ENCODE measurements at regions of chr19 and their contacts with region 1.

Region 1: DNA sequence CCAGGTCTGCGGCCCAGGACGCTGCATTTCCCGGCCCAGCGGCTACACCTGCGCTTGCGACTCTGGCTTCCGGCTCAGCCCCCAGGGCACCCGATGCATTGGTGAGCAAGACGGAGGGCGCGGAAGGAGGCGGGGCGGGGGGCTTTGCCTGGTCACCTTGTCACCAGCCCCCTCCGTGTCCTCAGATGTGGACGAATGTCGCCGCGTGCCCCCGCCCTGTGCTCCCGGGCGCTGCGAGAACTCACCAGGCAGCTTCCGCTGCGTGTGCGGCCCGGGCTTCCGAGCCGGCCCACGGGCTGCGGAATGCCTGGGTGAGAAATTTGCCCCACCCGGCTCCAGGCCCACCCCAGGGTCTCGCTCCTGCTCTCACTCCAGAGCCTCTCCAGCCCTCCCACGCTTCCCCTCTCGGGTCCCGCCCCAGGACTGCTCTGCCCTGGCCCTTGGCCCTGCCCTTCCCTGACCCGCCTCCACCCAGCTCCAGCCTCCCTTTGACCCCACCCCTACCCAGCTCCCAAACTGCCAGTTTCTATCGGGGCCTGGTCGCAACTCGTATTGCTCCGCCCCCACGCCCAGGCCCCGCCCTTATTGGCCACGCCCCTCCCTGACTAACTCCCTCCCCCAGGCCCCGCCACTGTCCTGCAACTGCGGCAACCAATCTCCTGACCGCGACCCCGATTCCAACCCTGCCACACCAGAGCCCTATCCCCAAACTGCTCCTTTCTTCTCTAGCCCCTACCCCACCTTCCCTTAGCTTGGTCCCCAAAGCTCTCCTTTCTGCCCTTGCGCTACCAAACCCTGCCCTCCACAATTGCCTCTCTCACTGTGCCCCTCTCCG is 8.6 kb downstream of the LTBP4 start:
- DNase-seq: peak; percentile 74 to 86 (median 82)
- H3K4me3 ChIP-seq: peak overlapping the region in 1 of 2 donors; percentile 63
- H3K4me3 Mint-ChIP-seq: peak overlapping the region; percentile 77 to 91 (median 88)
- H3K27ac ChIP-seq: peak overlapping the region; percentile 66
- H3K27ac Mint-ChIP-seq: peak overlapping the region; percentile 94 to 100 (median 97)
- H3K4me1 ChIP-seq: peaks cover 82% of the 10 kb centered on the region
- H3K4me1 Mint-ChIP-seq: peaks cover 39 to 98% (median 61%) of the 10 kb centered on the region in 4 donors
- H3K27me3 ChIP-seq: no peaks in the 10 kb centered on the region
- H3K27me3 Mint-ChIP-seq: no peaks in the 10 kb centered on the region

Region 2: DNA sequence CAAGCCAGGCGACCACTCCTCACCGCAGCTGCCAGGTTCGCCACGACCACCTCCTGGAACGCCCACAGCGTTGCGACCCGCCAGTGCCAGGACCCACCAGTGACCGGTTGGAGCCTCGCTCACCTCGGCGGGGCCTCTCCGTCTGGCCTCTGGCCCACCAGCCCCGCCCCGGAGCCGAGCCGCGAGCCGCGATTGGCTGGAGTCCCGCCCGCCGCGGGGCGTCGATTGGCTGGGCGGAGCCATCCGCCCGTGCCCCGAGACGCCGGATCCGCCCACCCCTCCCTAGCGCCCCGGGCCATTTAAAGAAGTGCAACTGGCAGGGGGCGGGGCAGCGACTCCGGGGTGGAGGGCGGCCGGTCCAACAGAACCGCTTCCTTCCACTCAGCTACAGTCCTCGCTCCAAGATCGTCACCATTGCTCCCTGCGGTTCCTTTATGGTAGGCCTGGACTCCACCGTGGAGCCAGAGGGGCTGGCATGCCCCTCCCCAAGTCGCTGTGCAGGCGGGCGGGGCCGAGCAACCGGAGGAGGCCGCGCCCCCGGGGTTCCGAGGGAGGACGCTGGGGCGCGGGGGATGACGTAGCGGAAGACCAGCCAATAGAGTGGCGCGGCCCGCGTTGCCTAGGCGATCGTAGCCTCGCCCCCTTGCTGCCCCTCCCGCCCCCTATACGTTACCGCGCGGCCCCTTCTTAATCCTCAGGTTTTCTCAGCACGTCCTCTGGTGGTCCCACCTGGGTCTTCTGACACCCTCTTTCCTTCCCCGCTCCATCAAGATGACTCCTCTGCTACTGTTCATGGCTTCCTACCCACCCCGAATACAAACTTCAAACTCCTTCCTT is 165.4 kb before region 1 on chr19 and contains the start of gene SERTAD3:
- CTCF ChIA-PET with region 1: no interaction called
- POLR2A ChIA-PET with region 1: interaction called, 16 read pairs
- intact Hi-C with region 1: loop called (anchors 2 kb)
- DNase-seq: peak; percentile 96 to 99 (median 97)
- H3K4me3 ChIP-seq: peak within 1 kb of the TSS; percentile 96 to 100
- H3K4me3 Mint-ChIP-seq: peak within 1 kb of the TSS; percentile 96 to 100 (median 100)
- H3K27ac ChIP-seq: peak within 1 kb of the TSS; percentile 75
- H3K27ac Mint-ChIP-seq: peak within 1 kb of the TSS; percentile 85 to 100 (median 99)
- H3K4me1 ChIP-seq: peaks cover 11% of the 10 kb centered on the region
- H3K4me1 Mint-ChIP-seq: peaks cover 11 to 22% (median 18%) of the 10 kb centered on the region in 4 donors
- H3K27me3 ChIP-seq: no peaks in the 10 kb centered on the region
- H3K27me3 Mint-ChIP-seq: no peaks in the 10 kb centered on the region
- total RNA-seq, gene SERTAD3: 17.8 to 19.4 TPM

Region 3: GRCh38 chr19:40598121-40598917 is 11.5 kb before region 1 on chr19:
- CTCF ChIA-PET with region 1: interaction called, 13 read pairs
- POLR2A ChIA-PET with region 1: interaction called, 94 read pairs
- intact Hi-C with region 1: loop called (anchors 2 kb)
- DNase-seq: peak; percentile 76 to 83 (median 78)
- H3K4me3 ChIP-seq: no peak overlapping the region
- H3K4me3 Mint-ChIP-seq: peak overlapping the region in 4 of 8 donors; percentile 45 to 58 (median 55)
- H3K27ac ChIP-seq: no peak overlapping the region
- H3K27ac Mint-ChIP-seq: peak overlapping the region in 3 of 7 donors; percentile 28 to 68 (median 42)
- H3K4me1 ChIP-seq: peaks cover 64% of the 10 kb centered on the region
- H3K4me1 Mint-ChIP-seq: peaks cover 34 to 63% (median 47%) of the 10 kb centered on the region in 4 donors
- H3K27me3 ChIP-seq: peaks cover 26% of the 10 kb centered on the region
- H3K27me3 Mint-ChIP-seq: peaks cover 19 to 29% of the 10 kb centered on the region in 2 donors

Region 4: GRCh38 chr19:40640744-40641143 is 31.0 kb after region 1 on chr19:
- CTCF ChIA-PET with region 1: interaction called, 106 read pairs
- POLR2A ChIA-PET with region 1: interaction called, 17 read pairs
- intact Hi-C with region 1: no loop called
- DNase-seq: no peak
- H3K4me3 ChIP-seq: no peak overlapping the region
- H3K4me3 Mint-ChIP-seq: no peak overlapping the region
- H3K27ac ChIP-seq: no peak overlapping the region
- H3K27ac Mint-ChIP-seq: peak overlapping the region in 1 of 7 donors; percentile 61
- H3K4me1 ChIP-seq: no peaks in the 10 kb centered on the region
- H3K4me1 Mint-ChIP-seq: peaks cover 0 to 3% (median 2%) of the 10 kb centered on the region in 4 donors
- H3K27me3 ChIP-seq: no peaks in the 10 kb centered on the region
- H3K27me3 Mint-ChIP-seq: peaks cover 2 to 4% of the 10 kb centered on the region in 2 donors